ENCODE measurements at regions of chr1 and their contacts with region 1.

Region 1: GRCh38 chr1:160291248-160292220 is 6.6 kb upstream of the PEX19 start:
- DNase-seq: peak; percentile 76
- ATAC-seq: peak; percentile 98
- H3K4me3 Mint-ChIP-seq: no peak overlapping the region
- H3K27ac Mint-ChIP-seq: no peak overlapping the region
- H3K4me1 Mint-ChIP-seq: peaks cover 2% of the 10 kb centered on the region
- H3K27me3 Mint-ChIP-seq: no peaks in the 10 kb centered on the region

Region 2: DNA sequence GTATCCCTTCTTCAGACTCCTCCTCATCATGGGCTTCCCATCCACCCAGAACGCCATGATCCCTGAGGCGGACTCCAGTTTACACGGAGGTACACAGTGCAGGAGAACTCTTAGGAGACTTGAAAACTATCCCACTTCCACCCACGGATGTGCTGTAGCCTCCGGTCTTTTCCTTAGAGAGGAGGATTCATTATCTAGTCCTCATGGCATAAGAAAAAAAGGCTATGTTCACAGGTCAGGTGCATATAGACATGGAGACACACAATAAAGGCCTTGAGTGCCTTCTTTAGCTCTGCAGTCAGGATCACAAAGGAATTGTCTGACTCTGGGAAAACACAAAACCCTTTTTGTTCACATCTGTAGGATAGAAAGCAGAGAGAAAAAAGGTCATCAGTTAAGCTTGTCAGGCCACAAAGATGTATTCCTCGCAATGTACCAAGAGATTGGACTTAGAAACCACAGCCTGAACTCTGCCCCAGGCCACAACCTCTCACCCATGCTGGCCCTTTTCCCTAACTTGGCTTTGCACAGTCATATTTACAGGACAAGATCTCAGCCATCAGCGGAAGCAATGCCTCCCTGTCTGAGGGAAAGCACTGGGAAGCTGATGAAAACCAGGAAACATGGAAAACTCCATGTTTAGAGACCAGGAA is 586.2 kb before region 1 on chr1:
- CTCF ChIA-PET with region 1: no interaction called
- POLR2A ChIA-PET with region 1: no interaction called
- intact Hi-C with region 1: no loop called
- DNase-seq: no peak
- ATAC-seq: no peak
- H3K4me3 Mint-ChIP-seq: no peak overlapping the region
- H3K27ac Mint-ChIP-seq: no peak overlapping the region
- H3K4me1 Mint-ChIP-seq: no peaks in the 10 kb centered on the region
- H3K27me3 Mint-ChIP-seq: peaks cover 2% of the 10 kb centered on the region

Region 3: DNA sequence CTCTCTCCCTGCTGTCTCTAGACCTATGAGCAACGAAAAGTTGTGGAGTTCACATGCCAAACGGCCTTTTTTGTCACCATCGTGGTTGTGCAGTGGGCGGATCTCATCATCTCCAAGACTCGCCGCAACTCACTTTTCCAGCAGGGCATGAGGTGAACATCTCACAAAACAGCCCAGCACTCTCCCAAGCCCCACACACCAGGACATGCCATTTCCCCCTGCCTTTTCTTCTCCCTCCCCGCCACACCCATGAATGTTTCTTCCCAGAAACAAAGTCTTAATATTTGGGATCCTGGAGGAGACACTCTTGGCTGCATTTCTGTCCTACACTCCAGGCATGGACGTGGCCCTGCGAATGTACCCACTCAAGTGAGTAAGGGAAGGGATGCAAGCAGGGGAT is 109.9 kb before region 1 on chr1:
- CTCF ChIA-PET with region 1: interaction called, 10 read pairs
- POLR2A ChIA-PET with region 1: no interaction called
- intact Hi-C with region 1: no loop called
- DNase-seq: no peak
- ATAC-seq: no peak
- H3K4me3 Mint-ChIP-seq: no peak overlapping the region
- H3K27ac Mint-ChIP-seq: no peak overlapping the region
- H3K4me1 Mint-ChIP-seq: no peaks in the 10 kb centered on the region
- H3K27me3 Mint-ChIP-seq: peaks cover 16% of the 10 kb centered on the region

Region 4: DNA sequence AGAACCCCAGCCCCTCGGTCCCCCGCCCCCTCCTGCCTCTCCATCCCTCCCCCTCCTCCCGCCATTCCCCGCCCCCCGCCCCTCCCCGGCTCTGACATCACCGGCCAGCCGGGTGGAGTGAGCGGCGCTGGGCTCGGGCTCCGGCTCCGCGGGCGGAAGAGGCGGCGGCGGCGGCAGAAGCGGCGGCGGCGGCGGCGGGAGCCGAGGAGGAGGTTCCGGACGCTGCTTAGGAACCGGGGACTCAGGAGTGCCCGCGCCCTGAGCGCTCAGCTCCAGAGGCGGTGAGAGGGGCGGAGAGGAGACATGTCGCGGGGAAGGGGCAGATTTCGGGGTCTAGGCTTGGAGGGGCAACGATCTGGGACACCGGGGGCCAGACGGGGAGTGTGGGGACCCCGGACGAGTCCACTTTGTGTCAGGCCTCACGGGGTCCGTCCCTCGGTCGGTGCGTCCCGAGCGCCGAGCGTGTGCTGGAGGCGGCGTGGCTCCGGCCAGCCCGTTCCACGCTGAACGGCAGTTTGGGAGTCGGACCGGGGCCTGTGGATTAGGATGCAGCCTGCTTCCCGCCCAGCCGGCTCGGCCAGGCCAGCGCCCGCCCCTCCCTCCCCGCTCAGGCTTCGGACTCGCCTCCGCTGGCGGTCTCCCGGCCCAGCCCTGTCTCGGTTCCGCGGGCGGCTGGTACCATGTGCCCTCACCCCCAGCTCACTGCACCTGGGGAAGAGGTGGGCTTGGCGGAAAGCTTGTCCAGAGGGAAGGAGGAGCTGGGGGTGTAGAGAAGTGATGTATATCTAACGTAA is 86.1 kb before region 1 on chr1 and contains the start of gene PEA15:
- CTCF ChIA-PET with region 1: interaction called, 11 read pairs
- POLR2A ChIA-PET with region 1: no interaction called
- intact Hi-C with region 1: no loop called
- DNase-seq: peak; percentile 83
- ATAC-seq: peak; percentile 76
- H3K4me3 Mint-ChIP-seq: peak within 1 kb of the TSS; percentile 81
- H3K27ac Mint-ChIP-seq: peak within 1 kb of the TSS; percentile 86
- H3K4me1 Mint-ChIP-seq: peaks cover 47% of the 10 kb centered on the region
- H3K27me3 Mint-ChIP-seq: no peaks in the 10 kb centered on the region
- total RNA-seq, gene PEA15: 42.5 to 63.4 TPM

Region 5: DNA sequence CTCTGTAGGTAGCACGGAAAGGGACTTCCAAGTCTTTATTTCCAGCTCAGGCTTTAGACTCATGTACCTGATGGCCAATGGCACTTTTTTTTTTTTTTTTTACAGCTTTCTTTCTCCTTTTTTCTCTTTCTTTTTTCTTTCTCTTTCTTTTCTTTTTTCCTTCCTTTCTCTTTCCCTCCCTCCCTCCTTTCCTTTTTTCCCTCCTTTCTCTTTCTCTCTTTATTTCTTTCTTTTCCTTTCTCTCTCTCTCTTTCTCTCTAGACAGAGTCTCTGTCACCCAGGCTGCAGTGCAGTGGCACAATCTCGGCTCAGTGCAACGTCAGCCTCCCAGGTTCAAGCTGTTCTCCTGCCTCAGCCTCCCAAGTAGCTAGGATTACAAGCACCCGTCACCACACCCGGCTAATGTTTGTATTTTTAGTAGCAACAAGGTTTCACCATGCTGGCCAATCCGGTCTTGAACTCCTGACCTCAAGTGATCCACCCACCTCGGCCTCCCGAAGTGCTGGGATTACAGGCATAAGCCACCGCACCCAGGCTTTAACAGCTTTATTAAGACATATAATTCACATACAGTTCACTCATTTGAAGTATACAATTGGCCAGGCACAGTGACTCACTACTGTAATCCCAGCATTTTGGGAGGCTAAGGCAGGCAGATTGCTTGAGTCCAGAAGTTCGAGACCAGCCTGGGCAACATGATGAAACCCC is 24.1 kb before region 1 on chr1:
- CTCF ChIA-PET with region 1: interaction called, 15 read pairs
- POLR2A ChIA-PET with region 1: interaction called, 4 read pairs
- intact Hi-C with region 1: no loop called
- DNase-seq: no peak
- ATAC-seq: no peak
- H3K4me3 Mint-ChIP-seq: no peak overlapping the region
- H3K27ac Mint-ChIP-seq: no peak overlapping the region
- H3K4me1 Mint-ChIP-seq: peaks cover 12% of the 10 kb centered on the region
- H3K27me3 Mint-ChIP-seq: no peaks in the 10 kb centered on the region

Region 6: GRCh38 chr1:160307118-160307854 is 15.8 kb after region 1 on chr1:
- CTCF ChIA-PET with region 1: interaction called, 33 read pairs
- POLR2A ChIA-PET with region 1: interaction called, 5 read pairs
- intact Hi-C with region 1: no loop called
- DNase-seq: no peak
- ATAC-seq: no peak
- H3K4me3 Mint-ChIP-seq: no peak overlapping the region
- H3K27ac Mint-ChIP-seq: no peak overlapping the region
- H3K4me1 Mint-ChIP-seq: no peaks in the 10 kb centered on the region
- H3K27me3 Mint-ChIP-seq: no peaks in the 10 kb centered on the region

Region 7: GRCh38 chr1:160376525-160377131 is 85.1 kb after region 1 on chr1:
- CTCF ChIA-PET with region 1: interaction called, 17 read pairs
- POLR2A ChIA-PET with region 1: no interaction called
- intact Hi-C with region 1: no loop called
- DNase-seq: peak; percentile 48
- ATAC-seq: peak; percentile 89
- H3K4me3 Mint-ChIP-seq: no peak overlapping the region
- H3K27ac Mint-ChIP-seq: no peak overlapping the region
- H3K4me1 Mint-ChIP-seq: peaks cover 13% of the 10 kb centered on the region
- H3K27me3 Mint-ChIP-seq: no peaks in the 10 kb centered on the region

Measured in activated CD4-positive, alpha-beta T cell treated with anti-CD3 and anti-CD28 coated beads for 36 hours (primary cell).